IMR-90 (cell line): ENCODE measurements at regions of chr18 and their contacts with region 1.

Region 1: GRCh38 chr18:2337552-2338141 is 233.7 kb downstream of the METTL4 start:
- DNase-seq: peak; percentile 50
- ATAC-seq: peak; percentile 79
- H3K4me3 ChIP-seq: no peak overlapping the region
- H3K27ac ChIP-seq: no peak overlapping the region
- H3K4me1 ChIP-seq: no peaks in the 10 kb centered on the region
- H3K27me3 ChIP-seq: peaks cover 3% of the 10 kb centered on the region
- CTCF ChIP-seq: peak; percentile 63
- POLR2A ChIP-seq: no peak
- RAD21 ChIP-seq: peak; percentile 66

Region 2: GRCh38 chr18:2471523-2471922 is 133.9 kb after region 1 on chr18:
- CTCF ChIA-PET with region 1: no interaction called
- POLR2A ChIA-PET with region 1: no interaction called
- dilution Hi-C with region 1: no loop called
- in situ Hi-C with region 1: no loop called
- intact Hi-C with region 1: loop called (anchors 5 kb)
- DNase-seq: no peak
- ATAC-seq: no peak
- H3K4me3 ChIP-seq: no peak overlapping the region
- H3K27ac ChIP-seq: no peak overlapping the region
- H3K4me1 ChIP-seq: no peaks in the 10 kb centered on the region
- H3K27me3 ChIP-seq: peaks cover 4% of the 10 kb centered on the region
- CTCF ChIP-seq: no peak
- POLR2A ChIP-seq: no peak
- RAD21 ChIP-seq: no peak

Region 3: GRCh38 chr18:2536493-2536892 is 198.8 kb after region 1 on chr18:
- CTCF ChIA-PET with region 1: no interaction called
- POLR2A ChIA-PET with region 1: no interaction called
- dilution Hi-C with region 1: no loop called
- in situ Hi-C with region 1: loop called (anchors 5 kb)
- intact Hi-C with region 1: no loop called
- DNase-seq: peak; percentile 72
- ATAC-seq: peak; percentile 75
- H3K4me3 ChIP-seq: no peak overlapping the region
- H3K27ac ChIP-seq: no peak overlapping the region
- H3K4me1 ChIP-seq: no peaks in the 10 kb centered on the region
- H3K27me3 ChIP-seq: no peaks in the 10 kb centered on the region
- CTCF ChIP-seq: no peak
- POLR2A ChIP-seq: no peak
- RAD21 ChIP-seq: no peak

Region 4: DNA sequence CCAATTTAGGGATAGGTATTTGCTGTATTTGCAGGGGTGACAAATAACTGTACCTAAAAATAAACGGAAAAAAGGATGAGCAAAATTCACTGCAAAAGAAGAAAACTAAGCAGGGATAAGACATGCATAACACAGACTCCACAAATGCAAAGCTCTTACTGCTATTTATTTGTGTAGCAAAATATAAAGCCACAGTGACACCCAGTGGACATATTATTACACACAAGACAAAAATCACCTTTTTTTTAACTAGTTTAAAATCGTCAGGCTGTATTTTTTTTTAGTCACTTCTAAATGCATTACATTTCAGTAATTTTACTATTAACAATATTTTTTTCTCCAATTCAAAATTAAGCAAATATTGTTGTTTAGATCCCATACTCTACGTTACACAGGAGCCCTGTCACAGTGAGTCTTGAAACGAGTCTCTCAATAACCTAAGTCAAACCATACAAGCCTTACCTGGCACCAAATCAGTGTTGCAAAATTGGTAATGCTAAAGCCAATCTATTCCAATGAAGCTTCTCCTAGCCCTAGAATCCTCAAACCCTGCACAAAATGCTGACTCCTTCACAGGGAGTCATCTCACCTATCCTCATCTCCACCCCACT is 209.9 kb after region 1 on chr18:
- CTCF ChIA-PET with region 1: no interaction called
- POLR2A ChIA-PET with region 1: no interaction called
- dilution Hi-C with region 1: no loop called
- in situ Hi-C with region 1: no loop called
- intact Hi-C with region 1: loop called (anchors 1 kb)
- DNase-seq: peak; percentile 71
- ATAC-seq: peak; percentile 89
- H3K4me3 ChIP-seq: no peak overlapping the region
- H3K27ac ChIP-seq: no peak overlapping the region
- H3K4me1 ChIP-seq: no peaks in the 10 kb centered on the region
- H3K27me3 ChIP-seq: no peaks in the 10 kb centered on the region
- CTCF ChIP-seq: peak; percentile 66
- POLR2A ChIP-seq: no peak
- RAD21 ChIP-seq: peak; percentile 64